Activated CD4-positive, alpha-beta memory T cell treated with anti-CD3 and anti-CD28 coated beads, Interleukin-2, amount 10 ng/mL, durations not matched to agents 7 days and 5 days (primary cell): ENCODE measurements at regions of chr13 and their contacts with region 1.

Region 1: GRCh38 chr13:110944121-110944967 is 29.5 kb upstream of the ANKRD10 start:
- DNase-seq: peak; percentile 70
- H3K4me3 Mint-ChIP-seq: no peak overlapping the region
- H3K27ac Mint-ChIP-seq: no peak overlapping the region
- H3K4me1 Mint-ChIP-seq: peaks cover 23% of the 10 kb centered on the region
- H3K27me3 Mint-ChIP-seq: peaks cover 6% of the 10 kb centered on the region

Region 2: GRCh38 chr13:110902370-110902769 is 42.0 kb before region 1 on chr13:
- CTCF ChIA-PET with region 1: no interaction called
- POLR2A ChIA-PET with region 1: no interaction called
- DNase-seq: no peak
- H3K4me3 Mint-ChIP-seq: no peak overlapping the region
- H3K27ac Mint-ChIP-seq: no peak overlapping the region
- H3K4me1 Mint-ChIP-seq: peaks cover 23% of the 10 kb centered on the region
- H3K27me3 Mint-ChIP-seq: no peaks in the 10 kb centered on the region

Region 3: DNA sequence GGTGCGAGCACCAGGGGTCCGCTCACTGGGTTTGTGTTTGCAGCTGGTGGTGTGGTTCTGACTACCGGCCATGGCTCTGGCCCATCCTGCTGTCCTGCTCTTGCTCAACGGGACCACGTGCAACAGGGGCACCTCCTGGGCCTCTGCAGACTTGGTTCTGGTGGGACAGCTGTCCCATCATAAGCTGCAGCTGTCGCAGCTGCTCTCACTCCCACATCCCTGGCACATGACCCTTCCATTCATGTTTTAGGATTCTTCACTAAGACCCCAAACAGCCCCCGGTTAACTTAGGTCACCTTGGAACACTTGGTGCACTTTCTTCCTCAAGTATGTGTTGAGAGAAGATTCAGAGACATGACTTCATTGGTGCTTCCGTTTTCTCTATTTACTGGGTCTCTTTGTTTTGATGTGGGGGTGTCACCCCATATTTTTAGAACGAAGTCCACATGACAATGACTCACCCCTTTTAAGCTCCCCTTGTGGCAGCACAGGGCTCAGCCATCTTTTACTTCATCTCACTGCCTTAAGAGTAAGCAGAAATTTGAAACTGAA is 102.3 kb after region 1 on chr13:
- CTCF ChIA-PET with region 1: interaction called, 35 read pairs
- POLR2A ChIA-PET with region 1: no interaction called
- DNase-seq: no peak
- H3K4me3 Mint-ChIP-seq: no peak overlapping the region
- H3K27ac Mint-ChIP-seq: peak overlapping the region; percentile 51
- H3K4me1 Mint-ChIP-seq: peaks cover 25% of the 10 kb centered on the region
- H3K27me3 Mint-ChIP-seq: peaks cover 10% of the 10 kb centered on the region

Region 4: DNA sequence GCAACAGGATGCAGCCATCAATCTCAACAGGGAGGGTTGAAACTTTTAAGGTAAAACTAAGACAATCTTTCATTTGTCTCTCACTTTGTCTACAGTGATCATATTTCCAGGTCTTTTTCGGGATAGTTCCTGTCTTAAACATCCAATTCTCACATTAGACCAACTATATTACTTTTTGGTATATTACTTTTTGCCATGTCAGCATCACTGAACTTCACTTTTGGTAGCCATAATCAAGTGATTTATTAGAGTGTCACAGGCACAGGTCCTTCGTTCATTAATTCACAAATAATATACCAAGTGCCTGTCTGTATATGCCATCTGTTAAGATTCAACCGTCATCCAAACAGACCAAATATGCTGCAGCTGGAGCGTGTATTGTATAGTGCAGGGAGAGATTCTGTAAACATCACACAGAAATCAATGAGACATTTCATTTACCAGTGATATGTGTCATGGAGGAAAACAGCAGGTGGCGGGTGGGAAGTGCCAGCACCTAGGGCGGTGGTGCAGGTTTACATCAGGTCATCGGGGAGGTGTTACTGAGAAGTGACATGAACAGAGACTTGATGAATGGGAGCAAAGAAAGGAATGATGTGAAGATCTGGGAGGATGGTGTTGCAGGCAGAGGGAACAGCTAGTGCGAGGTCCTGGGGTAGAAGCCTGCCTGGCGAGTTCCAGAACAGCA is 195.7 kb after region 1 on chr13:
- CTCF ChIA-PET with region 1: no interaction called
- POLR2A ChIA-PET with region 1: no interaction called
- DNase-seq: no peak
- H3K4me3 Mint-ChIP-seq: no peak overlapping the region
- H3K27ac Mint-ChIP-seq: no peak overlapping the region
- H3K4me1 Mint-ChIP-seq: no peaks in the 10 kb centered on the region
- H3K27me3 Mint-ChIP-seq: peaks cover 60% of the 10 kb centered on the region